ENCODE measurements at regions of chr5 and their contacts with region 1.

Region 1: GRCh38 chr5:178732281-178732680 is 1.8 kb upstream of the ZNF354A start:
- DNase-seq: no peak
- H3K4me3 Mint-ChIP-seq: no peak overlapping the region
- H3K27ac Mint-ChIP-seq: no peak overlapping the region
- H3K4me1 Mint-ChIP-seq: peaks cover 4% of the 10 kb centered on the region
- H3K27me3 Mint-ChIP-seq: no peaks in the 10 kb centered on the region

Region 2: DNA sequence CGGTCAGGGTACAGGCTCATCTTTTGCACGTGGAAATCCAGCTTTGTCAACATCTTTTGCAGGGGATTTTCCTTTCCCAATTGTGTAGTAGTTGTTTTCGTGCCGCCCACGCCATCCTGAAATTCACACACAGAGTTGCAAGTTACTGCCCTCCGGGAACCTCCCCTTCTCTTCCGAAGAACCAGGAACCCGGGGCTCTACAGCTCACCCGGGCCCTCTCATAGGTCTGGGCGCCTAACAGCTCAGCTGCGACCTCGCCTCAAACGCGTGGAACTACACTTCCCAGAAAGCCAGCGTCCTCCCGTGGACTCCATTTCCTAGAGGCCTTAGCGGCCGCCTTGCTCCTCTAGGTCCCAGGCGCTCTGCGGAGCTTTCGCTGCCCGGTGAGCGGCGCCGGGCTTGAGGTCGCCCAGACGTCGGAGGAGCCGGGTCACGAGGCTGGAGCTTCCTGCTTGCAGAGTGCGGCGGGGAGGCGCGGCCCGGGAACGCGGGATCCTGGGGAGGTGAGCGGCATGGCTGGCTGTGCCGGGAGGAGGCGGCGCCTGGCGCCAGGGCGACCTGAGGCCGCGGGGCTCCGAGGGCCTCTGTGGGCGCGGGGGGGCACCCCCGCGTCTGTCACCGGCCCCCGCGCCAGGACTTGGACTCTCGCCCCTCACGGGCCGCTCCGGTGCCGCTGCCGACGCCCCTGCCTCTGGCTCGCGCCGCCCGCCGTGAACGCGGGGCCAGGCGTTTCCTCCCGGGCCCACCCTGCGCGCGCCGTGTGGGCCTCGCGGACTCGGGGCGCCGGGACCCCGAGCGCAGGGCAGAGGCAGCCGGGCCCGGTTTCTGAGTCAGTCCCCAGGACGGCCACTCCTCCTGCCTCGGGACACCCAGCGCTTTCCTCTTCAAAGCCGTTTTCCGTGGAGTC is 127.6 kb after region 1 on chr5 and contains the start of gene ZNF354B:
- intact Hi-C with region 1: loop called (anchors 1 kb)
- DNase-seq: peak; percentile 78
- H3K4me3 Mint-ChIP-seq: peak within 1 kb of the TSS; percentile 85
- H3K27ac Mint-ChIP-seq: peak within 1 kb of the TSS; percentile 64
- H3K4me1 Mint-ChIP-seq: peaks cover 18% of the 10 kb centered on the region
- H3K27me3 Mint-ChIP-seq: no peaks in the 10 kb centered on the region
- total RNA-seq, gene ZNF354B: 13.8 and 16.4 TPM in 2 replicates

Region 3: GRCh38 chr5:179023528-179024430 is 291.5 kb after region 1 on chr5 and contains the start of gene ZNF879:
- intact Hi-C with region 1: loop called (anchors 1 kb)
- DNase-seq: peak; percentile 90
- H3K4me3 Mint-ChIP-seq: peak within 1 kb of the TSS; percentile 91
- H3K27ac Mint-ChIP-seq: peak within 1 kb of the TSS; percentile 74
- H3K4me1 Mint-ChIP-seq: peaks cover 5% of the 10 kb centered on the region
- H3K27me3 Mint-ChIP-seq: peaks cover 3% of the 10 kb centered on the region
- total RNA-seq, gene ZNF879: 1.9 and 2.3 TPM in 2 replicates